ENCODE measurements at regions of chr14 and their contacts with region 1.

Region 1: GRCh38 chr14:50342221-50343078 is 30.3 kb downstream of the DMAC2L start:
- DNase-seq: peak; percentile 75
- H3K4me3 ChIP-seq: no peak overlapping the region
- H3K27ac ChIP-seq: peak overlapping the region; percentile 5
- H3K4me1 ChIP-seq: peaks cover 32% of the 10 kb centered on the region
- H3K27me3 ChIP-seq: no peaks in the 10 kb centered on the region
- CTCF ChIP-seq: peak; percentile 41 to 75

Region 2: DNA sequence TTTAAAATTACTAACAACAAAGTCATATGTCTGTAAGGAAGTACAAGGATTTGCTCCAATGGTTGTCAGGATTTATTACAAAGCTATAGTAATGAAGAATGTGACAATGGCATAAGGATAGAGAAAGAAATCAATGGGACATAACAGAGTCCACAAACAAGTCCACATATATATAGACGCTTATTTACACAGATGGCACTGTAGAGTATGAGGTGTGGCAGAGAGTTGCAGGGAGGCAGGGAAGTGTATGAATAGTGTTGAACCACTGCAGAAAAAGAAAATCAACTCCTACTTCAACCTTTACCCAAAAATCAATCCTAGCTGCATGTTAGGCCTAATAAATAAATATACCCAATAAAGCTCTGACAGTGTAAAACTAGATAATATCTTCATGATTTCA is 132.4 kb before region 1 on chr14:
- CTCF ChIA-PET with region 1: no interaction called
- dilution Hi-C with region 1: no loop called
- in situ Hi-C with region 1: no loop called
- intact Hi-C with region 1: no loop called
- DNase-seq: no peak
- H3K4me3 ChIP-seq: no peak overlapping the region
- H3K27ac ChIP-seq: no peak overlapping the region
- H3K4me1 ChIP-seq: no peaks in the 10 kb centered on the region
- H3K27me3 ChIP-seq: no peaks in the 10 kb centered on the region
- CTCF ChIP-seq: no peak

Region 3: DNA sequence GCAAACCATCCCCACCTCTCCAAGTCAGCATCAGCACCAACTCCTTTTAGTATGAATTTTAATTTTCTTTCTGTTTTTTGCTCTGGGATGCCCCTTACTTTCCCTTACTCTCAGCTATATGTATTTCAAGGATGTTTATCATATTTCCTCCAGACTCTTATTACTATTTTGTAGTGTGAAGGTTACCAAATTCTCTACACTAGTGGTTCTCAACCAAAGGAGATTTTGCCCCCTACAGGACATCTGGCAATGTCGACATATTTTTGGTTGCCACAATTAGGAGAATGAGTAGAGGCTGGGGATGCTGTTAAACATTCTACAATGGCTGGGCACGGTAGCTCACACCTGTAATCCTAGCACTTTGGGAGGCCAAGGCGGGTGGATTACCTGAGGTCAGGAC is 81.9 kb before region 1 on chr14:
- CTCF ChIA-PET with region 1: no interaction called
- dilution Hi-C with region 1: no loop called
- in situ Hi-C with region 1: no loop called
- intact Hi-C with region 1: no loop called
- DNase-seq: peak; percentile 22
- H3K4me3 ChIP-seq: no peak overlapping the region
- H3K27ac ChIP-seq: no peak overlapping the region
- H3K4me1 ChIP-seq: no peaks in the 10 kb centered on the region
- H3K27me3 ChIP-seq: no peaks in the 10 kb centered on the region
- CTCF ChIP-seq: peak; percentile 42 to 54

Region 4: DNA sequence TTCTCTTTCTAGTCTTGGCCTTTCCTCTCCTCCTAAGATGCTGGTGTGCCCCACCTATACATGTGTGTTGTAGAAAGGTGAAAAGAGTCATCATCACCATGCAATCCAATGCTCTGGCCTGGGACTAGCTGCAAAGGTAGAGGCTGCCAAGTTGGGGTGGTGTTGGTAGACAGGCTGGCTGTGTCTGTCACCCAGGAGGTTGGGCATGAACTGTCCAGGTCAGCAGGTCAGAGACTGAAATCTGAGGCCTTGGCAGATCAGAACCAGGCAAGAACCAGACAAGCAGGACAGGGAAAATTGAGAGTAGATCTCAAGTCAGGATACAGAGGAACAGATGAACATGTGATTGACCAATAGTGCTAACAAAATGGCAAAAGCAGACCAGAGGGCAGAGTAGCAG is 56.6 kb before region 1 on chr14:
- CTCF ChIA-PET with region 1: no interaction called
- dilution Hi-C with region 1: no loop called
- in situ Hi-C with region 1: no loop called
- intact Hi-C with region 1: no loop called
- DNase-seq: no peak
- H3K4me3 ChIP-seq: no peak overlapping the region
- H3K27ac ChIP-seq: no peak overlapping the region
- H3K4me1 ChIP-seq: no peaks in the 10 kb centered on the region
- H3K27me3 ChIP-seq: no peaks in the 10 kb centered on the region
- CTCF ChIP-seq: no peak

Region 5: GRCh38 chr14:50303744-50304471 is 38.5 kb before region 1 on chr14:
- CTCF ChIA-PET with region 1: no interaction called
- dilution Hi-C with region 1: no loop called
- in situ Hi-C with region 1: no loop called
- intact Hi-C with region 1: no loop called
- DNase-seq: no peak
- H3K4me3 ChIP-seq: no peak overlapping the region
- H3K27ac ChIP-seq: no peak overlapping the region
- H3K4me1 ChIP-seq: no peaks in the 10 kb centered on the region
- H3K27me3 ChIP-seq: no peaks in the 10 kb centered on the region
- CTCF ChIP-seq: no peak

Region 6: DNA sequence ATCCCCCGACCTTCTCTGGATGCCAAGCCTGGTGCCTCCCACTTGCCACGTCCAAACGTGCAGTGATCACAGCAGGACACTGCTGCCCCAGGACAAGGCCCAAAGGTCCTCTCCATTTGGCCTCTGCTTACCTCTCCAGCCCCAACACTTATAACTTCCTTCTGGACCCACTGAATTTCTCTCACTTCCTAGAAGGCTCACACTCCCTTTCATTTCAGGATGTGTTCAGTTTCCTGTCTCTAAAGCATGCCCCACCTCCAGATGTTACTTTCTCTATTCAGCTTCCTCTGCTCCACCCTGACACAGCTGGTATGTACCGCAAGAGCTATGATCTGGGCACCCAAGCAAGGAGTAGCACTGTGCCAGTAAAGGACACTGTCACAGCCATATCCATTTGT is 21.3 kb after region 1 on chr14:
- CTCF ChIA-PET with region 1: no interaction called
- dilution Hi-C with region 1: no loop called
- in situ Hi-C with region 1: no loop called
- intact Hi-C with region 1: loop called (anchors 2 kb)
- DNase-seq: no peak
- H3K4me3 ChIP-seq: no peak overlapping the region
- H3K27ac ChIP-seq: no peak overlapping the region
- H3K4me1 ChIP-seq: peaks cover 27% of the 10 kb centered on the region
- H3K27me3 ChIP-seq: no peaks in the 10 kb centered on the region
- CTCF ChIP-seq: no peak

Region 7: GRCh38 chr14:50396631-50397390 is 54.4 kb after region 1 on chr14 and contains the start of gene CDKL1:
- CTCF ChIA-PET with region 1: no interaction called
- dilution Hi-C with region 1: no loop called
- in situ Hi-C with region 1: no loop called
- intact Hi-C with region 1: loop called (anchors 2 kb)
- DNase-seq: peak; percentile 76
- H3K4me3 ChIP-seq: peak within 1 kb of the TSS; percentile 60 to 67 (median 67)
- H3K27ac ChIP-seq: peak within 1 kb of the TSS; percentile 96
- H3K4me1 ChIP-seq: peaks cover 12% of the 10 kb centered on the region
- H3K27me3 ChIP-seq: no peaks in the 10 kb centered on the region
- CTCF ChIP-seq: no peak
- total RNA-seq, gene CDKL1: 13.7 to 14.1 TPM

Region 8: DNA sequence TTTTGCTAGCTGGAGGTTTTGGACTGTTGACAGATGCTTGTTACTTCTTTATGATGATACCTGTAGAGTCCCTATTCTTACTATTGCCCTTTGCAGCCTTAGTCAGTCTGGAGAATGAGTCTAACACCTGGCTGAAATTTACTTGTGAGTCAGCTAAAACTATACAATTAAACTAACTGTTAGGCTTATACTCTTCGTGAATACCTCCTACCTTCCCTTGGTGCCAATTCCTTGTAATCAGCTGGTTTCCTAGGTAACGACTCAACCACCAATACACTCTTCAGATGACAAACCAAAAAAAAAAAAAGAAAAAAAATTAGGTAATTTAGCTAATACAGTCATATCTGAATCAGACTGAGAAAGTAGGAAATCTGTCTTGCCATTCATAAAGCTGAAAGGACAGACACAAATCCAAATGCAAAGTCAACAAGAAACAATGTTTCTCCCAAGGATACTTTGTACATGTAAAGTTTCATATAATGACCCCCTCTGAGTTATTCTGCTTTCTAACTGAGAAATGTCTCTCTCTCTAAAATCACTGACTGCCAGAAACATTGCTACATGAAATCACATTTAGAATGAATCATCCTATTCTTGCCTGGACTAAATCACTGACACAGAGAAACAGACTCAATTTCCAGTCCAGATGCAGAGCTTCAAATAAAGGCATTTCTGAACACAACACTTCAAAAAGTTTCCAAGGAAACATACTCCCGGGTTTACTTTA is 110.7 kb after region 1 on chr14:
- CTCF ChIA-PET with region 1: no interaction called
- dilution Hi-C with region 1: no loop called
- in situ Hi-C with region 1: no loop called
- intact Hi-C with region 1: loop called (anchors 10 kb)
- DNase-seq: peak; percentile 98
- H3K4me3 ChIP-seq: no peak overlapping the region
- H3K27ac ChIP-seq: peak overlapping the region; percentile 95
- H3K4me1 ChIP-seq: peaks cover 16% of the 10 kb centered on the region
- H3K27me3 ChIP-seq: no peaks in the 10 kb centered on the region
- CTCF ChIP-seq: no peak

Region 9: DNA sequence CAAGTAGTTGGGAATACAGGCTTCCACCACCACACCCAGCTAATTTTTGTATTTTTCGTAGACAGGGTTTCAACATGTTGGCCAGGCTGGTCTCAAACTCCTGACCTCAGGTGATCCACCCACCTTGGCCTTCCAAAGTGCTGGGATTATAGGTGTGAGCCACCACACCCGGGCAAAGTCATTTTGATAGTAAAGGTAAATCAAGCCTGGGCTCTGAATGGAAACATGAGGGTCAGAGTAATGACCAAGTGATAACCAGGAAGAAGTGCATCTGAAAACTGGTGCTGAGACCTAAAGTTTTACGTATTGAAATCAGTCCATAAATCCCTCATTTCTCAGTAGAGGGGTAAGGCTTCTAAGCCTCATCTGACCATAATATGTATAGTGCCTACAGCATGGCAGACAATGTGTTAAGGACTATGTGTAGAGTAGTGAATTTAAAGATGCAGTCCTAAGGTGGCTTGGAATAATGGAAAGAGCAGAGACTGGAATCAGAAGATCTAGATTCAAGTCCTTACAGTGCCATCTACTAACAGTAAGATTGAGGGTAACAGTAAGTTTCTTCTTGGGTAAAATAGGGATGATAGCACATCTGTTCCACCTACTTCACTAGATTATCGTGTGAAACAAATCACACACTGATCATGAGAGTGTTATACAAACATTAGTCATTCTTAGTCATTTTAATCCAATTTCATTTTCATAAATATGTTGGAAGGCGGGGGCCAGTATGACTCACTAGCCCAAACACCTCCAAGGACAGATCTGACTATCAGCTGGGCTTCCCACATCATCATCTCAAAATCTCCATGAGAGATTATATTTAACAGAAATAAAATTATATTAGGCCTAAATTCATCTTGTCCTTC is 178.7 kb after region 1 on chr14:
- CTCF ChIA-PET with region 1: no interaction called
- dilution Hi-C with region 1: loop called (anchors 25 kb)
- in situ Hi-C with region 1: loop called in 1 of 2 experiments (anchors 10 kb)
- intact Hi-C with region 1: no loop called
- DNase-seq: peak; percentile 93
- H3K4me3 ChIP-seq: no peak overlapping the region
- H3K27ac ChIP-seq: peak overlapping the region; percentile 91
- H3K4me1 ChIP-seq: peaks cover 23% of the 10 kb centered on the region
- H3K27me3 ChIP-seq: no peaks in the 10 kb centered on the region
- CTCF ChIP-seq: no peak